ENCODE measurements at regions of chr2 and their contacts with region 1.

Region 1: DNA sequence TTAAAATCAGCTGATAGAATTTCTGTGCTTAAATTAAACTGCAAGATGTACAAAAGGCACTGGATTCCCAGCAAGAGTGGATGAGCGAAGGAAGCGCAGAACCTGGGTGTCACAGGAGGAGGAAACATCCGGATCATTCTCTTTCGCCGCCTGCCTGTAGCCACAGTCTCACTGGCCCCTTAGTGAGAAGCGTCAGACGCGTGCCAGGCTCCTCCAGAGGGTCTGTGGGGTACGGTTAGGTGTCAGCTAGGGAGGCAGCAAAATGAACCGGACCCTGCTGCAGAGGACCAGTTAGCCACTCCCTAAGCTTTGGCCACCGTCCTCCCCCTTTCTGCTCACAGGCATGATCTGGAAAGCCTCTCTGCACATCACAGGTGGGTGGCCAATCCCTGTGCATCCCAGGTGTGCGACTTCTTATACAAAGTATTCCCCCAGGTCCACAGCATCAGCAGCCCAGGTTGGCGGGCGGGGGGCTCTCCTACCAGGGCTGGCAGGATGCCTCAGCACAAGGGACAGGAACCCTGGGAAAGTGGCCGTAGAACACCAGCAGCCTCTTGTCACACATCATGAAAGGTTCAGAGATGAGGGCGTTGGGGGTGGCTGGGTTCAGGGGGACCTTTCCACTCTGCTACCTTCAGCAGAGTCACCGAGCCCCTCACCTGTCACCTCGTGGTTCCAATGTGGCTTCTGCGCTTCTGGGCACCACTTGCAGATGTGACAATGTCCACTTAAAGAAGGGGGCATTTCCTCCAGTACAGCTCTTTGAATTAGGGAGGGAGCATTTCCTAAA is 61.1 kb upstream of the SLC66A3 start:
- DNase-seq: peak; percentile 31
- ATAC-seq: no peak
- H3K4me3 Mint-ChIP-seq: no peak overlapping the region
- H3K27ac Mint-ChIP-seq: no peak overlapping the region
- H3K4me1 Mint-ChIP-seq: no peaks in the 10 kb centered on the region
- H3K27me3 Mint-ChIP-seq: peaks cover 26% of the 10 kb centered on the region

Region 2: GRCh38 chr2:11124503-11125068 is 30.4 kb after region 1 on chr2:
- CTCF ChIA-PET with region 1: interaction called, 10 read pairs
- DNase-seq: peak; percentile 75
- ATAC-seq: peak; percentile 74
- H3K4me3 Mint-ChIP-seq: no peak overlapping the region
- H3K27ac Mint-ChIP-seq: no peak overlapping the region
- H3K4me1 Mint-ChIP-seq: peaks cover 8% of the 10 kb centered on the region
- H3K27me3 Mint-ChIP-seq: peaks cover 21% of the 10 kb centered on the region